K562 (cell line): ENCODE measurements at regions of chr1 and their contacts with region 1.

Region 1: GRCh38 chr1:201970334-201971159 is 11.9 kb upstream of the RNPEP start:
- DNase-seq: no peak
- ATAC-seq: peak; percentile 56
- H3K4me3 ChIP-seq: no peak overlapping the region
- H3K27ac ChIP-seq: no peak overlapping the region
- H3K4me1 ChIP-seq: no peaks in the 10 kb centered on the region; a peak in 1 of 5 replicates
- H3K27me3 ChIP-seq: no peaks in the 10 kb centered on the region
- CTCF ChIP-seq: no peak
- EP300 ChIP-seq: no peak
- POLR2A ChIP-seq: peak; percentile 65
- RAD21 ChIP-seq: no peak

Region 2: GRCh38 chr1:201530741-201531531 is 439.6 kb before region 1 on chr1:
- CTCF ChIA-PET with region 1: no interaction called
- POLR2A ChIA-PET with region 1: interaction called, 3 read pairs
- in situ Hi-C with region 1: no loop called
- intact Hi-C with region 1: loop called (anchors 10 kb)
- DNase-seq: peak; percentile 76 to 88 (median 82)
- ATAC-seq: peak; percentile 98
- H3K4me3 ChIP-seq: no peak overlapping the region
- H3K27ac ChIP-seq: no peak overlapping the region
- H3K4me1 ChIP-seq: peaks cover 6 to 14% of the 10 kb centered on the region in 2 experiments
- H3K27me3 ChIP-seq: peaks cover 0 to 13% of the 10 kb centered on the region in 2 experiments; a peak in 3 of 5 replicates
- CTCF ChIP-seq: peak; percentile 95 to 98 (median 98)
- EP300 ChIP-seq: peak; percentile 41
- POLR2A ChIP-seq: no peak
- RAD21 ChIP-seq: peak; percentile 97 to 98

Region 3: GRCh38 chr1:201709564-201710295 is 260.8 kb before region 1 on chr1:
- CTCF ChIA-PET with region 1: no interaction called
- POLR2A ChIA-PET with region 1: no interaction called
- in situ Hi-C with region 1: no loop called
- intact Hi-C with region 1: loop called (anchors 10 kb)
- DNase-seq: peak; percentile 79 to 89 (median 85)
- ATAC-seq: peak; percentile 98
- H3K4me3 ChIP-seq: no peak overlapping the region
- H3K27ac ChIP-seq: no peak overlapping the region
- H3K4me1 ChIP-seq: peaks cover 12 to 23% of the 10 kb centered on the region in 2 experiments; a peak in 4 of 5 replicates
- H3K27me3 ChIP-seq: peaks cover 0 to 4% of the 10 kb centered on the region in 2 experiments; a peak in 1 of 5 replicates
- CTCF ChIP-seq: peak; percentile 92 to 94 (median 94)
- EP300 ChIP-seq: no peak
- POLR2A ChIP-seq: no peak
- RAD21 ChIP-seq: peak; percentile 91 to 93

Region 4: GRCh38 chr1:201850053-201850397 is 120.5 kb before region 1 on chr1:
- CTCF ChIA-PET with region 1: no interaction called
- POLR2A ChIA-PET with region 1: no interaction called
- in situ Hi-C with region 1: no loop called
- intact Hi-C with region 1: no loop called
- DNase-seq: no peak
- ATAC-seq: no peak
- H3K4me3 ChIP-seq: no peak overlapping the region
- H3K27ac ChIP-seq: no peak overlapping the region
- H3K4me1 ChIP-seq: no peaks in the 10 kb centered on the region
- H3K27me3 ChIP-seq: no peaks in the 10 kb centered on the region
- CTCF ChIP-seq: no peak
- EP300 ChIP-seq: no peak
- POLR2A ChIP-seq: no peak
- RAD21 ChIP-seq: no peak

Region 5: DNA sequence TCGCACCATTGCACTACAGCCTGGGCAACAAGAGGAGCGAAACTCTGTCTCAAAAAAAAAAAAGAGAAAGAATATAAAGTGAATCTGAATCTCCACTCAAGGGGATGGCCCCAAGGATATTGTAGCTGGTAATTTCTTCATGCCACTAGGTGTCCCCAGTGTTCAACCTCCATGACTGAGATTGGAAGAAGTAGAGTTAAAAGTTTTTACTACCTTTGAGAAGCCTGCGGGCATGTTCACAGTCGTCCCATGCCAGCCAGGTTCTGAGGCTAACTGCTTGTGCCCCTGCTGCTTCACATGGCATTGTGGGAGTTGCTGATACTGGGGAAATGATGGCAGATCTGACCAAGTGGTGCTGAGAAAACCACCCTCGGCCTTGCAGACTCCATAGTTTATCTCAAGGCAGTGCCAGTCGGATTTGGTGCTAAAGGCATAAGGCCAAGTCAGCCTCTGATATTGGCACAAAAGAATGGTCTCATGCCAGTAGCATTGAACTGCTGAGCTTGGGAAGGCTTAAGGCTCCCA is 92.6 kb before region 1 on chr1:
- CTCF ChIA-PET with region 1: interaction called, 16 read pairs
- POLR2A ChIA-PET with region 1: interaction called, 4 read pairs
- in situ Hi-C with region 1: no loop called
- intact Hi-C with region 1: loop called (anchors 1 kb)
- DNase-seq: peak; percentile 55 to 73 (median 58)
- ATAC-seq: peak; percentile 81
- H3K4me3 ChIP-seq: no peak overlapping the region
- H3K27ac ChIP-seq: no peak overlapping the region
- H3K4me1 ChIP-seq: peaks cover 0 to 9% of the 10 kb centered on the region in 2 experiments; a peak in 3 of 5 replicates
- H3K27me3 ChIP-seq: no peaks in the 10 kb centered on the region
- CTCF ChIP-seq: peak; percentile 67 to 82 (median 76)
- EP300 ChIP-seq: no peak
- POLR2A ChIP-seq: peak; percentile 62
- RAD21 ChIP-seq: peak; percentile 27 to 75; a peak in 3 of 4 replicates

Region 6: GRCh38 chr1:201890223-201890622 is 80.3 kb before region 1 on chr1:
- CTCF ChIA-PET with region 1: interaction called, 117 read pairs
- POLR2A ChIA-PET with region 1: interaction called, 24 read pairs
- in situ Hi-C with region 1: loop called (anchors 5 kb)
- intact Hi-C with region 1: no loop called
- DNase-seq: peak in 1 of 4 experiments; percentile 36
- ATAC-seq: no peak
- H3K4me3 ChIP-seq: no peak overlapping the region
- H3K27ac ChIP-seq: no peak overlapping the region
- H3K4me1 ChIP-seq: peaks cover 23 to 34% of the 10 kb centered on the region in 2 experiments
- H3K27me3 ChIP-seq: 0 out of 5 replicates have a peak, but pooled peaks cover 0 to 4% of the 10 kb centered on the region in 2 experiments
- CTCF ChIP-seq: 0 out of 6 replicates have a peak, but pooled peaks of 1 of the 3 experiments have one; percentile 22
- EP300 ChIP-seq: no peak
- POLR2A ChIP-seq: no peak
- RAD21 ChIP-seq: no peak

Region 7: DNA sequence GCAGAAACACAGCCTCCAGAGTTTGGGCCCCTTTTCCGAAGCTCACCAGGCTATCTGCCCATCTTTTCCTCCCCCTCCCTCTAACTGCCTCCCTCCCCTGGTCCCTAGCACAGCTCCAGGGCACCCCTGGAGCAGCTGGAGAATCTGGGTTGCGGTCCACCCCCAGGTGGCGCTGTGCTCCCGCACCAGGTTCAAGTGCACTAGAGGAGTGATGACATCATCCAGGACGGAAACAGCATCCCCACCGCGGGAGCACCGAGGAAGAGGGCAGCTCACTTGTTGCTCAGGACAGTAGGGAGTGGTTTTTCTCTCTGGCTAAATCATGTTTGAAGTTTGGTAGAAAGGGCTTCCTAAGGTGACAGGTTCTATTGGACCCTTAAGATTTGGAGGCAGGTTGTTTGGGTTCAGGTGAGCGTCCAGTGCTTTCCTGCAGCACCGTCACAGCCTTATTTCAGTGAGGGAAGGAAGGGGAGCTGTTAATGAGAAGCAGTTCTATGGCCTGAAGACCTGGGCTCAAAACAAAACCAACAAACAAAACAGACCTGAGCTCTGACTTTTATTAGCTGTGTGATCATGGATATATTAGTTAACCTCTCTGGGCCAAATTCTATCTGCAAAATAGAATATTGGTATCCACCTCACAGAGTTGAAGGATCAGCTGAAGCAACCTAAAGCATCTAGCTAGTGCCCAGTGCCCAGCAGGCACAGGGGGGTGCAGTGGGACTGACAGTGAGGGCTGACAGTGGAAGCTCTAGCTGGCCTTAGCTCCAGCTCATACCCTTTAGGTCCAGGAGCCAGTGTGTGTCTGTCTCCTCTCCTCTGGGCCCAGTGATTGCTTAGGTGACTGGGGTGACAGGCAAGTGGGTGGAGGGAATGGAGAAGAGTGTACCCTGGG is 74.4 kb before region 1 on chr1:
- CTCF ChIA-PET with region 1: interaction called, 117 read pairs
- POLR2A ChIA-PET with region 1: interaction called, 24 read pairs
- in situ Hi-C with region 1: loop called (anchors 5 kb)
- intact Hi-C with region 1: loop called (anchors 1 kb)
- DNase-seq: peak; percentile 93 to 98 (median 96)
- ATAC-seq: peak; percentile 98
- H3K4me3 ChIP-seq: no peak overlapping the region
- H3K27ac ChIP-seq: no peak overlapping the region; the same call in 2 of the 3 replicates
- H3K4me1 ChIP-seq: peaks cover 3 to 8% of the 10 kb centered on the region in 2 experiments; a peak in 2 of 5 replicates
- H3K27me3 ChIP-seq: peaks cover 0 to 21% of the 10 kb centered on the region in 2 experiments; a peak in 3 of 5 replicates
- CTCF ChIP-seq: peak; percentile 98 to 99 (median 99)
- EP300 ChIP-seq: peak; percentile 53
- POLR2A ChIP-seq: no peak
- RAD21 ChIP-seq: peak; percentile 99 to 100

Region 8: DNA sequence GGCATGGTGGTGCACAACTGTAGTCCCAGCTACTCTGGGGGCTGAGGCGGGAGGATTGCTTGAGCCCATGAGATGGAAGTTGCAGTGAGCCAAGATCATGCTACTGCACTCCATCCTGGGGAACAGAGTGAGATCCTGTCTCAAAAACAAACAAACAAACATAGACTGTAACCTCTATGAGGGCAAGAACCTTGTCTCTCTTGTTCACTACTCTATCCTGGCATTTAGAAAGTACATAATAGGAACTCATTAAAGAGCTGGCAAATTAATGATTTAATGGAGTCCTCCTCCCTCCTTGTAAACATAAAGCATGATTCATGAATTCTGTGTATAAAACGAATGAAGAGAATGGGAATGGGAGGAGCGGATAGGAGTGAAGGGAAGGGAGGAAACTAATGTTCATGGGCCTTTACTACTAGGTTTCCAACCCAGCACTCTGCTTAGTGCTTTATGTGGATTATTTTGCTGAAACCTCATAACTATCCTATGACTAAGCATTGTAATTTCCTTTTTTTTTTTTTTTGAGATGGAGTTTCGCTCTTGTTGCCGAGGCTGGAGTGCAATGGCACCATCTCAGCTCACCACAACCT is 32.8 kb before region 1 on chr1:
- CTCF ChIA-PET with region 1: no interaction called
- POLR2A ChIA-PET with region 1: no interaction called
- in situ Hi-C with region 1: no loop called
- intact Hi-C with region 1: no loop called
- DNase-seq: no peak
- ATAC-seq: no peak
- H3K4me3 ChIP-seq: no peak overlapping the region
- H3K27ac ChIP-seq: no peak overlapping the region
- H3K4me1 ChIP-seq: peaks cover 26 to 32% of the 10 kb centered on the region in 2 experiments
- H3K27me3 ChIP-seq: no peaks in the 10 kb centered on the region
- CTCF ChIP-seq: no peak
- EP300 ChIP-seq: no peak
- POLR2A ChIP-seq: no peak
- RAD21 ChIP-seq: no peak

Region 9: DNA sequence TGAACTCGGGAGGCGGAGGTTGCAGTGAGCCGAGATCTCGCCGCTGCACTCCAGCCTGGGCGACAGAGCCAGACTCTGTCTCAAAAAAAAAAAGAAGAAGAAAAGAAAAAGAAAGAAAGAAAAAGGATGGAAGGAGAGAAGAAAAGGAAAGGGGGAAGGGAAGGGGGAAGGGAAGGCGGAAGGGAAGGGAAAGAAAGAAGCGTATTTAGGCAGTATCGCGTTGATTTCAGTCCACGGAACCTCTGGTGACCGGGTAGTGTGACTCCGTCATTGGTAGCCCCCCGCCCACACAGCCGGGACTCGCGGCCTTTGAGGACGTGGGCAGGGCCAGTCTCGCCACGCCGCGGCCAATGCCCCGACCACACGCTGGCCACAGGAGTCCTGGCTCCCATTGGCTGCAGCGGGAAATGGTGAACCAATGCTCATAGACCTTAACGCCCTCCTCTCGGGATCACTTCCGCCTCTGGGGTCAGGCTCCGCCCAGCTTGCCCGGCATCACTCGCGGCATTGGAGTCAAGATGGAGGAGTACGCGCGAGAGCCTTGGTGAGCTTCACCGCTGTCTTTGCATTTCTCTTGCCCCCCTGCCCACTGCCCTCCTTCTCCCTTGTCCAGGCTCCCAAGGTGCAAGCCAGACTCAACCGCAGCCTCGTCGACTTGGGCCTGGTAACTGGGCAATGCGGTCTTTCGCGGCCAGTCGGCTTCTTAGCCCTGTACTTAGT is 15.4 kb before region 1 on chr1 and contains the start of gene TIMM17A:
- CTCF ChIA-PET with region 1: no interaction called
- POLR2A ChIA-PET with region 1: interaction called, 54 read pairs
- in situ Hi-C with region 1: no loop called
- intact Hi-C with region 1: loop called (anchors 2 kb)
- DNase-seq: peak; percentile 96 to 100 (median 97)
- ATAC-seq: peak; percentile 100
- H3K4me3 ChIP-seq: peak within 1 kb of the TSS; percentile 81
- H3K27ac ChIP-seq: peak within 1 kb of the TSS; percentile 98
- H3K4me1 ChIP-seq: peaks cover 12 to 13% of the 10 kb centered on the region in 2 experiments; a peak in 3 of 5 replicates
- H3K27me3 ChIP-seq: no peaks in the 10 kb centered on the region
- CTCF ChIP-seq: 0 out of 6 replicates have a peak, but pooled peaks of 1 of the 3 experiments have one; percentile 3
- EP300 ChIP-seq: peak; percentile 68
- POLR2A ChIP-seq: peak; percentile 99
- RAD21 ChIP-seq: peak in 1 of 2 experiments; percentile 7; a peak in 2 of 4 replicates
- polyA plus RNA-seq, gene TIMM17A: 676 to 744 TPM

Region 10: GRCh38 chr1:202056644-202057461 is 86.3 kb after region 1 on chr1:
- CTCF ChIA-PET with region 1: no interaction called
- POLR2A ChIA-PET with region 1: no interaction called
- in situ Hi-C with region 1: no loop called
- intact Hi-C with region 1: no loop called
- DNase-seq: peak in 2 of 4 experiments; percentile 6 to 25
- ATAC-seq: peak; percentile 46; the same call in 2 of the 3 replicates
- H3K4me3 ChIP-seq: no peak overlapping the region
- H3K27ac ChIP-seq: no peak overlapping the region
- H3K4me1 ChIP-seq: peaks cover 5 to 7% of the 10 kb centered on the region in 2 experiments; a peak in 4 of 5 replicates
- H3K27me3 ChIP-seq: peaks cover 9 to 32% of the 10 kb centered on the region in 2 experiments
- CTCF ChIP-seq: no peak
- EP300 ChIP-seq: no peak
- POLR2A ChIP-seq: no peak
- RAD21 ChIP-seq: no peak

Region 11: DNA sequence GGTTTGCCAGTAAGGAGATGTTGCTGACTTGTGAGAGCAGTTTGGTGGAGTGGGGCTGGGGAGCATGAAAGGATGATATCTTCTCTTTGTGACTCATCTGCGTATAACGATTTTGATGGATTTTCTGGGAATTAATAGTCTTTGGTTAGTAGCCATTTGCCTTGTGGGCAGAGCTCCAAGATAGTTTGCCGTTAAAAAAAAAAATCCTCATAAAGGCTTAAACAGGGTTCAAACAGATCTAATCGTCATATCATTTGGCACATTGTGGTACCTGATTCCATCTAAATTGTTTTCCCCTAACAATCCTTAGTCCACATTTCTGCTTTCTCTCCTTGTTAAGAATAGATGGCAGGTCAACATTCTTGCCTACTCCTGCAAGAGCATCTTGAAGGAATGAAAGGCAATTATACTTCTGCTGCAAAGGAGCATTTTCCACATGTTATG is 545.9 kb after region 1 on chr1:
- CTCF ChIA-PET with region 1: no interaction called
- POLR2A ChIA-PET with region 1: no interaction called
- in situ Hi-C with region 1: no loop called
- intact Hi-C with region 1: no loop called
- DNase-seq: peak in 1 of 4 experiments; percentile 33
- ATAC-seq: peak; percentile 28; the same call in 1 of the 3 replicates
- H3K4me3 ChIP-seq: no peak overlapping the region
- H3K27ac ChIP-seq: no peak overlapping the region
- H3K4me1 ChIP-seq: peaks cover 0 to 6% of the 10 kb centered on the region in 2 experiments; a peak in 2 of 5 replicates
- H3K27me3 ChIP-seq: no peaks in the 10 kb centered on the region
- CTCF ChIP-seq: no peak
- EP300 ChIP-seq: no peak
- POLR2A ChIP-seq: no peak
- RAD21 ChIP-seq: no peak